WTC11 (cell line): ENCODE measurements at regions of chr2 and their contacts with region 1.

Region 1: DNA sequence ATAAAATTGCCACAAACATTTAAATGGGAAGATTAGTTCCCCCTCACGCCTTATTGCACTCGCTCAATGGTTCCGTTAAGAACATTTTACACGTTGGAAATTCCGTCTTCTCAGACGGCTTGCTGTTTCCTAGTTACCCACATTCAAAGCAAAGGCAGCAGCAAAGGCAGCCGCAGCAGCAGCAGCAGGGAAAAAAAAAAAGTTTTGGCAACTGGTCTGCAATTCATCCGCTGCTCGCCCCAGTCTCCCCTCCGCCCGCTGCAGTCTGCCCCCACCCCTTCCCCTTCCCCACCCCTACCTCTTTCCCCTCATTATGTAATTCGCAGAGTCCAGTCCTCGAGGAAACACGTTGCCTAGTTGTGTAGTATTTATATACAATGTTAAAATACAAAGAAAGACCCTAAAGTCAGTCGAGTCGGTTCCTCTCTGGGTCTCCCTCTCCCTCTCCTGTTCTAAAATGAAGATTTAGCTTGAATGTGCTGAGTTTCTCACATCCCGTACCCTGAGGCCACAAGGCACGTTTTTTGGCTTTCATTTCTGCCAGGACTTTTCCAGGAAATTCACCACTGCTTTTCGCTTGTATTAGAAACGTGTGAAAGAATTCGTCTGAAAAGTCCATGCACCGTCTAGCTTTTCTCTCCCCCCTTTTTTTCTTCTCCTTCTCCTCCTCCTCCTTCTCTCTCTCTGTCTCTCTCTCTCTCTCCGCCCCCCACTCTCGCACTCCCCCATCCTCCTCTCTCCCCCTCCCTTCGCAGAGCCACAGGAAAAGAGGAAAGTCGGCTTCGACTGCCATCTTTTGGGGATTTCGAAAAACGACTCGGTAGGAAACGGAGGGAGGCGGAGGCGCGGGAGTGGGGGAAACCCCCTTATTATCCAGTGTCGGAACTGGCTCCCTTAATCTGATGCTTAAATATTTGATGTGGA is 140.0 kb downstream of the MEIS1 start:
- DNase-seq: peak; percentile 79
- ATAC-seq: peak; percentile 14
- H3K4me3 Mint-ChIP-seq: peak overlapping the region; percentile 82
- H3K27ac Mint-ChIP-seq: no peak overlapping the region; the same call in 1 of the 2 replicates
- H3K4me1 Mint-ChIP-seq: peaks cover 39% of the 10 kb centered on the region
- H3K27me3 Mint-ChIP-seq: peaks cover 17% of the 10 kb centered on the region
- CTCF ChIP-seq: no peak

Region 2: DNA sequence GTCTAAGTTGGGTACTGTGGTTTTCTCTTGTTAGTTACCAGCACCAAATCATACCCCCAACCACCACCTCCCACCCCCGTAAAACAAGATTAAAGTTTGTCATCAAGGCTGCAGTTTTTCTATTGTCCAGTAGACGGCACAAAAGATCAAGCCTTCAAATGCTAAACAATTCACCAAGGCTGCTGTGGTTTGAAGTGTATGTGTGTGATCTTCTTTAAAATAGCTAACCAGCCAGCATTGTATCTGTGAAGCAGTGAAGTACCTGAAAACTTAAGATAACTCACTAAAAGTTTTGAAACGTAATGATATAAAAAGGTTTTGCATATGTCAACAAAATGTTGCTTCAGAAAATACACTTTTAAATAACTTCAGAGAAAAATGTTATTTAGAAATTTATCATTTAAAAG is 145.9 kb before region 1 on chr2:
- CTCF ChIA-PET with region 1: interaction called, 81 read pairs
- POLR2A ChIA-PET with region 1: interaction called, 6 read pairs
- DNase-seq: no peak
- ATAC-seq: no peak
- H3K4me3 Mint-ChIP-seq: no peak overlapping the region
- H3K27ac Mint-ChIP-seq: no peak overlapping the region
- H3K4me1 Mint-ChIP-seq: peaks cover 44% of the 10 kb centered on the region
- H3K27me3 Mint-ChIP-seq: peaks cover 100% of the 10 kb centered on the region
- CTCF ChIP-seq: peak; percentile 76

Region 3: GRCh38 chr2:66434679-66435548 is 140.0 kb before region 1 on chr2 and contains the start of gene MEIS1:
- CTCF ChIA-PET with region 1: interaction called, 81 read pairs
- POLR2A ChIA-PET with region 1: interaction called, 6 read pairs
- DNase-seq: peak; percentile 78
- ATAC-seq: peak; percentile 34
- H3K4me3 Mint-ChIP-seq: peak within 1 kb of the TSS; percentile 97
- H3K27ac Mint-ChIP-seq: no peak within 1 kb of the TSS
- H3K4me1 Mint-ChIP-seq: peaks cover 58% of the 10 kb centered on the region
- H3K27me3 Mint-ChIP-seq: peaks cover 100% of the 10 kb centered on the region
- CTCF ChIP-seq: no peak
- total RNA-seq, gene MEIS1: 0.30 to 0.48 TPM (median 0.39 TPM) in 3 replicates

Region 4: DNA sequence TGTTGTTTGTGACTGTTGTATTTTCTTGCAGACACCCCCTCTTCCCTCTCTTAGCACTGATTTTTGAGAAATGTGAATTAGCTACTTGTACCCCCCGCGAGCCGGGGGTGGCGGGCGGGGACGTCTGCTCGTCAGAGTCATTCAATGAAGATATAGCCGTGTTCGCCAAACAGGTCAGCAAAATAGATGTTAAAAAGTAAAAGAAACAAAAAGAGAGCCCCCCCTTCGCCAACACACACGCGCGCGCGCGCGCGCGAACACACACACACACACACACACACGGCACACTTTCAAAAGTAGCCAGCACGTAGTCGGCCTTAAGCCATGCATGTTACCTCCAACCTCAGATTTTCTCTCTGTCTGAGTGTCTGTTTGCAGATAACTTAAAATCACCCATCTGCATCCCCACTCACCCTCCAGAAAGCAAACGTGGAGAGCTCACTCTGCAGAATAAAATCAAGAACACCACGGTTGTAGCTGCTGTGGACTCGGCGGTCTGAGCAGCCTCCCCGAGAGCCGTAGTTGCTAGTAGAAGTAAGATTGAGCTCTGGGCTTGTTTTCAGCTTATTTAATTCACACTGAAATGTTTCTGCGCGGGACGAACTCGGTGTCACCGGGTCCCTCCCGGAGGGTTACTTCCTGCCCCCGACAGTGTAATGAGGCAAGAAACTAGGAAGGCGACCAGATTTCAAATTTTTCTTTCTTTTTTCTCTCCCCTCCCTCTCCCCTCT is 135.0 kb before region 1 on chr2:
- CTCF ChIA-PET with region 1: interaction called, 81 read pairs
- POLR2A ChIA-PET with region 1: interaction called, 3 read pairs
- DNase-seq: no peak
- ATAC-seq: no peak
- H3K4me3 Mint-ChIP-seq: peak overlapping the region; percentile 74
- H3K27ac Mint-ChIP-seq: no peak overlapping the region
- H3K4me1 Mint-ChIP-seq: peaks cover 80% of the 10 kb centered on the region
- H3K27me3 Mint-ChIP-seq: peaks cover 100% of the 10 kb centered on the region
- CTCF ChIP-seq: no peak

Region 5: DNA sequence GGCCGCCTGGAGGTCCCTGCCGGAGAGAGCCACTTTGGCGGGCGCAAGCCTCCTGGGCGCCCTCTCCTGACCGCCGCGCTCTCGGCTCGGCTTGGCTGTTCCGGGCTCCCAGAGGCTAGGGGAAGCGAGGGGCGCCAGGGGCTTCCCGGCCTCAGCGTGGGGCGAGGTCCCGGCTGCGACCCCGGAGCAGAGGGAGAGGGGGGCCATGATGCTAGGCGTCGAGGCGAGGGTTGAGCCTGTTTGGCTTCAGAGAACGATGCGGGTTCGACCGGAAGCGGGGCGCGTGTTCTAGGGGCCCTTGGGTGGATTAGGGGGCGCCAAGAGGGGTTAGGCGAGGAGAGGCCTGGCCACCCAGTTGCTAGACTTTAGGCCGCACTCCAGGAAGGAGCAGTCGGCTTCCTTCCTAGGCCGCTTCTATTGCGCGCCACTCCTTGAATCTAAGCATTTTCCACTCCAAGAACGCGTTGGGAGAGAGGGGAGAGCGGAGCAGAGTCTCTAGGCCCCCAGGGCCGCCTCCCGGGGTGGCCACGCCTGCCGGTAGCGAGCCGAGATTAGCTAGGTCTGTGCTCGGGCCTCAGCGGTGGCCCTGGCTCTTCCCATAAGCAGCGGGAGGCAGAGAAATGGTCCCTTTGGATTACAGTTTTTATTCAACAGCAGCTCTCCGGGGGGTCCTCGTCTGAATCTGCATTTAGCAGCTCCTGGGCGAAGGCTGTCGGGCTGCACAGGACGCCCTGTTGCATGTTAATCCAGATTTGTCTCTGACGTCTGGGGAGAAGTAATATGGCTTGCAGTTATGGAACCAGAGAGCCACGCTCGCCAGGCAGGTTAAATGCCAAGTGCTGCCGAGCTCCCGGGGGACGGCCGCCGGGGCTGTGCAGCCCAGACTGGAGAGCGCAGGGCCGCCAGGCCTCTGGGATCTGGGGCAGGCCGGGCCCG is 128.8 kb before region 1 on chr2:
- CTCF ChIA-PET with region 1: interaction called, 31 read pairs
- POLR2A ChIA-PET with region 1: interaction called, 3 read pairs
- DNase-seq: peak; percentile 62
- ATAC-seq: peak; percentile 74
- H3K4me3 Mint-ChIP-seq: peak overlapping the region; percentile 68
- H3K27ac Mint-ChIP-seq: no peak overlapping the region
- H3K4me1 Mint-ChIP-seq: peaks cover 37% of the 10 kb centered on the region
- H3K27me3 Mint-ChIP-seq: peaks cover 73% of the 10 kb centered on the region
- CTCF ChIP-seq: no peak

Region 6: GRCh38 chr2:66596256-66596655 is 21.3 kb after region 1 on chr2:
- CTCF ChIA-PET with region 1: no interaction called
- POLR2A ChIA-PET with region 1: no interaction called
- DNase-seq: no peak
- ATAC-seq: peak; percentile 70
- H3K4me3 Mint-ChIP-seq: no peak overlapping the region
- H3K27ac Mint-ChIP-seq: no peak overlapping the region; the same call in 1 of the 2 replicates
- H3K4me1 Mint-ChIP-seq: peaks cover 14% of the 10 kb centered on the region
- H3K27me3 Mint-ChIP-seq: no peaks in the 10 kb centered on the region
- CTCF ChIP-seq: no peak

Region 7: DNA sequence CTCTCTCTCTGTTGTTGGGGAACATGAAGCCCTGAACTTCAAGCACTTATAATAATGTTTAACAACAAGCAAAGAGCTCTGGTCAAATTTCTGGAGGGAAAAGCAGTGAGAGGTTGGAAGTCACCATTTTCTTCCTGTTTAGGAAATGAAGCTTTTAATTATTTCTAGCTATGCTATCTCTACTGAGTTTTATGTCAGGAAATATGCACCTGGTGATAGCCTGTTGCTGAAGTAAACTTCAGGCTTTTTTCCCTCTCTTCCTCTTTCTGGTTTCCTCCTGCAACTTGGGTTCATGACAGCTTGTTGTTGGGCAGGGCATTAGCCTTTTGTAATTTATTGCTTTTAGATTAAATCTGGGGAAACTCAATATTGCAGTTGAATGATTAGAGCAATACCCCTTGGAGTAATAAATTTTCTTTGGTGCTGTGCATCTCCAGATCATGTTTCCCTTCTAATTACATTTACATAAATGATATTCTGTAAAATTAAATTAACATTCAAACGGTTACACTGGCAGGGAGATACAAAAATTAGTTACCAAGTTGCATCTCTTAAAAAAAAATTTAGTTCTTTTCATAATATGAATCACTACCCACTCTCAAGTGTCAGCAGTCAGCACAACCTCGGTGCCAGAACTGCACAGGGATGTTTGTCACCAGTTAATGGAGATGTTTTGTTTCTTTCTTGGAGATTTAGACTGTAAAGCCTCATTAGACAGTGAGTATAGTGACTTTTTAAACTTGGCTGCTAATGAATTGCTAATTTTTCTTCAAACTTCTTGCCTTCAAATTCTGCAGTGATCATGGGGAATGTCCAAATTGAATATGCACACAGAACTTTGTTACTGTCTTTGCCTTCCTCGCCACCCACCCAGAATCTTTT is 355.6 kb after region 1 on chr2:
- CTCF ChIA-PET with region 1: no interaction called
- POLR2A ChIA-PET with region 1: no interaction called
- DNase-seq: no peak
- ATAC-seq: no peak
- H3K4me3 Mint-ChIP-seq: no peak overlapping the region
- H3K27ac Mint-ChIP-seq: no peak overlapping the region
- H3K4me1 Mint-ChIP-seq: no peaks in the 10 kb centered on the region
- H3K27me3 Mint-ChIP-seq: no peaks in the 10 kb centered on the region
- CTCF ChIP-seq: no peak